IMR-90 (cell line): ENCODE measurements at regions of chr10 and their contacts with region 1.

Region 1: GRCh38 chr10:73529089-73529832 is 33.4 kb upstream of the PPP3CB start:
- DNase-seq: peak; percentile 81
- ATAC-seq: peak; percentile 96
- H3K4me3 ChIP-seq: no peak overlapping the region
- H3K27ac ChIP-seq: no peak overlapping the region
- H3K4me1 ChIP-seq: no peaks in the 10 kb centered on the region
- H3K27me3 ChIP-seq: no peaks in the 10 kb centered on the region
- CTCF ChIP-seq: peak; percentile 91
- POLR2A ChIP-seq: 0 out of 2 replicates have a peak, but pooled peaks have one; percentile 51
- RAD21 ChIP-seq: peak; percentile 95

Region 2: GRCh38 chr10:73625884-73626752 is 96.9 kb after region 1 on chr10:
- CTCF ChIA-PET with region 1: no interaction called
- POLR2A ChIA-PET with region 1: no interaction called
- dilution Hi-C with region 1: no loop called
- in situ Hi-C with region 1: no loop called
- intact Hi-C with region 1: loop called (anchors 1 kb)
- DNase-seq: peak; percentile 98
- ATAC-seq: peak; percentile 96
- H3K4me3 ChIP-seq: peak overlapping the region; percentile 67
- H3K27ac ChIP-seq: peak overlapping the region; percentile 92
- H3K4me1 ChIP-seq: 0 out of 2 replicates have a peak, but pooled peaks cover 1% of the 10 kb centered on the region
- H3K27me3 ChIP-seq: no peaks in the 10 kb centered on the region
- CTCF ChIP-seq: no peak
- POLR2A ChIP-seq: peak; percentile 88
- RAD21 ChIP-seq: no peak